ENCODE measurements at regions of chr7 and their contacts with region 1.

Region 1: GRCh38 chr7:20238754-20239324 is 21.7 kb upstream of the MACC1 start:
- DNase-seq: peak; percentile 34
- ATAC-seq: peak; percentile 86
- H3K4me3 Mint-ChIP-seq: peak overlapping the region; percentile 73
- H3K27ac Mint-ChIP-seq: peak overlapping the region; percentile 92
- H3K4me1 Mint-ChIP-seq: peaks cover 69% of the 10 kb centered on the region
- H3K27me3 Mint-ChIP-seq: no peaks in the 10 kb centered on the region
- CTCF ChIP-seq: no peak

Region 2: DNA sequence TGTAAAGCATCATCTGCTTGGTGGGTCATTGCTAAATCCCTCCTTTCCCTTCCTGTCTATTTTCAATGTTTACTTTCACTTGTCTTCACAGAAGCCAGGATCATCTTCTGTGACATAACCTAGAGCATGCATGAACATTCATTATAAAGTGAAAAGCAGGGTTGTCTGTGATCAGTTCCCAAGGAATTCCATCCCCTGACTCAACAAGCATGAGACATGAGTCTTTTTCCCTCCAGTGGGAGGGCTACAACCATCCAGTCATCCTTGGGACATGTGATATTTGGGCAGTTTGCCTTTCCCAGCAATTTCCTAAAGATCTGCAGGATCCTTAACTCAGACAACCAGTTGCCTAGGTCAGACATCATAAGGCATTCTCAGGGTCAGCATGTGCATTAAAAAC is 299.1 kb before region 1 on chr7:
- CTCF ChIA-PET with region 1: no interaction called
- POLR2A ChIA-PET with region 1: no interaction called
- intact Hi-C with region 1: no loop called
- DNase-seq: no peak
- ATAC-seq: no peak
- H3K4me3 Mint-ChIP-seq: no peak overlapping the region
- H3K27ac Mint-ChIP-seq: no peak overlapping the region
- H3K4me1 Mint-ChIP-seq: no peaks in the 10 kb centered on the region
- H3K27me3 Mint-ChIP-seq: no peaks in the 10 kb centered on the region
- CTCF ChIP-seq: no peak

Region 3: GRCh38 chr7:20021831-20022230 is 217.0 kb before region 1 on chr7:
- CTCF ChIA-PET with region 1: no interaction called
- POLR2A ChIA-PET with region 1: no interaction called
- intact Hi-C with region 1: loop called (anchors 5 kb)
- DNase-seq: no peak
- ATAC-seq: peak; percentile 80
- H3K4me3 Mint-ChIP-seq: peak overlapping the region; percentile 13
- H3K27ac Mint-ChIP-seq: no peak overlapping the region
- H3K4me1 Mint-ChIP-seq: peaks cover 42% of the 10 kb centered on the region
- H3K27me3 Mint-ChIP-seq: no peaks in the 10 kb centered on the region
- CTCF ChIP-seq: no peak

Region 4: DNA sequence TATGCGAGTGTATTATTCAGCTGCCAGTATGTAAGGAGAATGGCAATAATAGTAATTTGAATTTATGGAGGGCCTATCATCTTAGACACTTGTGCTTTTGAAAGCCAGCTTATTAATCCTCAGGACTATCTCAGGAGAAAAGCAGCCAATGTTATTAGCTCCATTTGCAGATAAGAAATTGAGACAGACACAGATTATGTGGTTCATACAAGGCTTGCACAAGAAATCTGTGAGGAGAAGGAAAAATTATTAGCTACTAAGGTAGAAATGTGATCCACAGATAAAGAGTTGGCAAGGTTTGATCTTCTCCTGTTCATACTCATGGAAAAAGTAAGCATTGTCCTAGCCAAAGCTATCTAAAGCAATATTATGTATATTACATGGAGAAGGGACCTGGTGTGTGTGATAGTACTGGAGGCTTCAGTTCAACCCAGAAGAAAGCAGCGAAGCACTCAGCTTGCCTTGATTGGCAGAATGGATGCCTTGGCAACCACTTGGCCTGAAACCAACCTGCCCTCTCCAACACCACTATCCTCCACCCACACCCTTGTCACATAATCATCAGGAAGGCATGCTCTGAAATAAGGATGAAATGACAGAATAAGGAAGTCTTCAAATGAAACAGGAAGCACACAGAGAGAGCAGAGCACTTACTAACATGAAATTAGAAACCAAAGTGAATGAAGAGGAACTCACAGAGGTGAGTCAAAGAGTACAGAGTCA is 39.7 kb before region 1 on chr7:
- CTCF ChIA-PET with region 1: no interaction called
- POLR2A ChIA-PET with region 1: no interaction called
- intact Hi-C with region 1: loop called (anchors 1 kb)
- DNase-seq: peak; percentile 29
- ATAC-seq: peak; percentile 81
- H3K4me3 Mint-ChIP-seq: peak overlapping the region; percentile 69
- H3K27ac Mint-ChIP-seq: peak overlapping the region; percentile 94
- H3K4me1 Mint-ChIP-seq: peaks cover 55% of the 10 kb centered on the region
- H3K27me3 Mint-ChIP-seq: no peaks in the 10 kb centered on the region
- CTCF ChIP-seq: no peak

Region 5: DNA sequence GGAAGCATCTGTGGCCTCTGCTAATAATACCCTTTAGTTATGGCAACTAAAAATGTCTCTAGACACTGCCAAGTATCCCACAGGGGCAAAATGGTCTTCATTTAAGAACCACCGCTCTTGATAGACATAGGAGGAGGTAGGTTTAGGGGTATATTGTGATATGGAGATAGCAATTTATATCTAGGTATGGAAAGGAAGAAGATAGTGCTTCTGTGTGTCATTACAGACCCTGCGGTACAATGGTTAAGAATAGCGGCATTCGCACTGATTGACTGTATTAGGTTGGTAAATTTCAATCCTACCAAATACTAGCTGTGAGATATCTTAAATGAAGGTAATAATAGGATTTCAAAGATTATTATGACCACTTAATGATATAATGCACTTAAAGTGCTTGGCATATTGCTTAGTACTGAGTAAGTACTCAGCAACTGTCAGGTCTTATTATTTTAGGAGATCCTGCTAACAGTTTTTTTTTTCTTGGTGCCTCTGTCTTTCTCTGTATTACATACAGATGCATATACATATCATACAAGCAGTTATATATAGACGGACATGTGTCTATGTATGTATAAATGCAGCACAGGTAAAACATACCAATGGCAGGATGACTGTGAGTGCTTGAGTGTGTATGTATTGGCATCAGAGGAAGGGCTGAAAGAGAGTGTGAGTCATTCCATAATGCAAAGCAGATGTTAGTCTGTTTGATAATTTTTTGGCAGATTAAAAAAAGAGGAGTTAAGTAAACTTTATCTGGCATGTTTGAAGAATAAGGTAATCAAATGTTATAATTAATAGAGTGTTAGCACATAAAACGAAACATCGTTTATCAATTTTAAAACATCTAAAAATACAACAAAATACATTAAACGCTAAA is 41.9 kb after region 1 on chr7:
- CTCF ChIA-PET with region 1: no interaction called
- POLR2A ChIA-PET with region 1: no interaction called
- intact Hi-C with region 1: loop called (anchors 5 kb)
- DNase-seq: no peak
- ATAC-seq: no peak
- H3K4me3 Mint-ChIP-seq: no peak overlapping the region
- H3K27ac Mint-ChIP-seq: no peak overlapping the region
- H3K4me1 Mint-ChIP-seq: peaks cover 13% of the 10 kb centered on the region
- H3K27me3 Mint-ChIP-seq: no peaks in the 10 kb centered on the region
- CTCF ChIP-seq: no peak

Region 6: DNA sequence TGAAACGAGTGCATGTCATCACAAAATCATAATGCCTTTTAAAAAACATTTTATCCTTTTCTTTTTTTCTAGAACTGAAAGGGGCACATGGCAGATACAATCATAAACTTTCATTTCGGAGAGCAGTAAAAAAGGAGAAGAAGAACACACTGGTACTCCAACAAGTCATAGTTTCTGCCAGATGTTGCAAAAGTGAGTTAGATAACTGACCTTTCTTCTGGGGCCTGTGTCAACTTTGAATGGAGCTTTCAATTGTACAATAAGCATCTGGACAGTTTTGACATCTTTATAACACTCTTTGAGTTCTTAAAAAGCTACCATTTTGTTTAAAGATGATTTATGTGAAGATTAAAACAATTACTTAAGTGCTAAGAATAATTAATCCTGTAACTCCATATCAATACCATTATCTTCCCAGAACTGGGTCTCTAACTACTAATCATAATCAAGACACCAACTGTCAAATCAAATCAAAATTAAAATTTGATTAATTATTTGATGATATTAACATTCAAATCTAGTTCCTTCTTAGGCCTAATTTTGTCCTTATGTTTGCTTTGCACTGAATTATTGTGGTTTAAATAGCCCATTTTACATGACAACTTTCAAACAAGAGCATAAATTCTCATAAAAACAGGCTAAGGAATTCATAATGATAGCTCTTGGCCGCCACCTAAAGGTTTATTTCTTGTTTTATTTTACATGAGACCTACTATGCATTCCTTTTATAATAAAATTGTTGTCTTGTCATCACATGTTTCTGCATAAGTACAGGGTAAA is 72.3 kb after region 1 on chr7:
- CTCF ChIA-PET with region 1: no interaction called
- POLR2A ChIA-PET with region 1: no interaction called
- intact Hi-C with region 1: loop called (anchors 2 kb)
- DNase-seq: no peak
- ATAC-seq: peak; percentile 37
- H3K4me3 Mint-ChIP-seq: no peak overlapping the region
- H3K27ac Mint-ChIP-seq: peak overlapping the region; percentile 64
- H3K4me1 Mint-ChIP-seq: peaks cover 16% of the 10 kb centered on the region
- H3K27me3 Mint-ChIP-seq: no peaks in the 10 kb centered on the region
- CTCF ChIP-seq: peak; percentile 31